ENCODE measurements at regions of chr9 and their contacts with region 1.

Region 1: DNA sequence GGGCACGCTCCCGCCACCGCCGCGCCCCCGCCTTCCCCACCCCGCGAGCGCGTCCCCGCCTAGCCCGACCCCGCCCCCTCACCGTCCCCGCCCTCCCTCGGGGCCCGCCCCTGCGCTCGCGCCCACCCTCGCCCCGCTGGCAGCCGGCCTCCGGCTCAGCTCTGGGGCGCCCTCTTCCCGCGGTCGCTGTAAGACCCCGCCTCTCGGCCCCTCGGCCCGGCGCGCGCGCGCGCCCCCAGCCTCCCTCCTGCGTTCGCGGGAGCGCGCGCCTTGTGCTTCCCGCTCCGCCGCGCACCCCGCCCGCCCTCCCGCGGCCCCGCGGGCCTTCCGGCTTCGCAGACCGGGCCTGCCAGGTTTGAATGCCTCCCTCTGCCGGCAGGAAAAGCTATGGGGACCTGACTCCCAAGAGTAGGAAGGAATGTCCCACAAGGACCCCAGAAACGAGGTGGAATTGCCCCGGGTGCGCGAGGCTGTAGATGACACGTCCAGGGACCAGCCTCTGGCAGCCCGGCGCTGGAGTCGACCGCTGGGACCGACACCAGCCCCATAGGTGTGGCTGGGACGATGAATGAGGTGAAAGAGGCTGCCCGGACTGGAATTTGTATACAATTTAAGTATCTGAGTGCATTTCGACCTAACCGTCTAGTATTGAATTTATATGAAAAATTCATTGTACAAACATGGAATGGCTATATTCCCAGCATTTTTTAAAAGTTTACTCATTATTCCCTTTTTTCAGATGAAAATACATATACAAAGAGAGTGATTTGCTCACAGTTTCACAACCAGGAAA is 416 bp upstream of the PTBP3 start:
- DNase-seq: peak; percentile 84 to 91
- ATAC-seq: peak; percentile 89
- H3K4me3 ChIP-seq: peak overlapping the region; percentile 67 to 96 (median 88)
- H3K27ac ChIP-seq: peak overlapping the region; percentile 84 to 99 (median 97)
- H3K4me1 ChIP-seq: peaks cover 9 to 16% of the 10 kb centered on the region in 2 donors
- H3K27me3 ChIP-seq: no peaks in the 10 kb centered on the region
- CTCF ChIP-seq: peak; percentile 45 to 78 (median 57)
- POLR2A ChIP-seq: no peak

Region 2: GRCh38 chr9:112174965-112175795 is 158.7 kb before region 1 on chr9 and contains the start of gene SUSD1:
- in situ Hi-C with region 1: no loop called
- intact Hi-C with region 1: loop called (anchors 5 kb)
- DNase-seq: no peak
- ATAC-seq: peak in 1 of 2 donors; percentile 51
- H3K4me3 ChIP-seq: peak within 1 kb of the TSS; percentile 44 to 63 (median 56)
- H3K27ac ChIP-seq: peak within 1 kb of the TSS in 1 of 4 donors; percentile 34
- H3K4me1 ChIP-seq: peaks cover 0 to 5% of the 10 kb centered on the region in 2 donors
- H3K27me3 ChIP-seq: peaks cover 0 to 10% (median 5%) of the 10 kb centered on the region in 3 donors
- CTCF ChIP-seq: no peak
- POLR2A ChIP-seq: no peak
- total RNA-seq, gene SUSD1: 0.82 to 8.0 (median 2.2) TPM

Region 3: GRCh38 chr9:112249277-112249676 is 84.6 kb before region 1 on chr9:
- in situ Hi-C with region 1: no loop called
- intact Hi-C with region 1: no loop called
- DNase-seq: no peak
- ATAC-seq: no peak
- H3K4me3 ChIP-seq: no peak overlapping the region
- H3K27ac ChIP-seq: no peak overlapping the region
- H3K4me1 ChIP-seq: no peaks in the 10 kb centered on the region
- H3K27me3 ChIP-seq: no peaks in the 10 kb centered on the region
- CTCF ChIP-seq: no peak
- POLR2A ChIP-seq: no peak

Region 4: GRCh38 chr9:112348257-112349007 is 14.6 kb after region 1 on chr9:
- in situ Hi-C with region 1: no loop called
- intact Hi-C with region 1: no loop called
- DNase-seq: peak; percentile 56 to 61
- ATAC-seq: peak; percentile 39 to 66
- H3K4me3 ChIP-seq: peak overlapping the region; percentile 34 to 65 (median 43)
- H3K27ac ChIP-seq: no peak overlapping the region
- H3K4me1 ChIP-seq: peaks cover 0 to 5% of the 10 kb centered on the region in 2 donors
- H3K27me3 ChIP-seq: no peaks in the 10 kb centered on the region
- CTCF ChIP-seq: no peak
- POLR2A ChIP-seq: no peak

Region 5: DNA sequence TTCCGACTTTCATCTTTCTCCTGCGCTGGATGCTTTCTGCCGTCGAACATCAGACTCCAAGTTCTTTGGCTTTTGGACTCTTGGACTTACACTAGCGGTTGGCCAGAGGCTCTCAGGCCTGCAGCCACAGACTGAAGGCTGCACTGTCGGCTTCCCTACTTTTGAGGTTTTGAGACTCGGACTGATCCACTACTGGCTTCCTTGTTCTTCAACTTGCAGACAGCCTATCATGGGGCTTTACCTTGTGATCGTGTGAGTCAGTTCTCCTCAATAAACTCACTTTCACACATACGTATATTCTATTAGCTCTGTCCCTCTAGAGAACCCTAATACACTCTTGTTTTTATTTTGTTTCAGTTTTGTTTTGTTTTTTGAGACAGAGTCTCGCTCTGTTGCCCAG is 877.0 kb after region 1 on chr9:
- in situ Hi-C with region 1: no loop called
- intact Hi-C with region 1: no loop called
- DNase-seq: no peak
- ATAC-seq: no peak
- H3K4me3 ChIP-seq: no peak overlapping the region
- H3K27ac ChIP-seq: no peak overlapping the region
- H3K4me1 ChIP-seq: no peaks in the 10 kb centered on the region
- H3K27me3 ChIP-seq: no peaks in the 10 kb centered on the region
- CTCF ChIP-seq: no peak
- POLR2A ChIP-seq: no peak

Measured in gastrocnemius medialis (tissue), 4 donors.